CD4-positive, alpha-beta T cell (primary cell): ENCODE measurements at regions of chr7 and their contacts with region 1.

Region 1: DNA sequence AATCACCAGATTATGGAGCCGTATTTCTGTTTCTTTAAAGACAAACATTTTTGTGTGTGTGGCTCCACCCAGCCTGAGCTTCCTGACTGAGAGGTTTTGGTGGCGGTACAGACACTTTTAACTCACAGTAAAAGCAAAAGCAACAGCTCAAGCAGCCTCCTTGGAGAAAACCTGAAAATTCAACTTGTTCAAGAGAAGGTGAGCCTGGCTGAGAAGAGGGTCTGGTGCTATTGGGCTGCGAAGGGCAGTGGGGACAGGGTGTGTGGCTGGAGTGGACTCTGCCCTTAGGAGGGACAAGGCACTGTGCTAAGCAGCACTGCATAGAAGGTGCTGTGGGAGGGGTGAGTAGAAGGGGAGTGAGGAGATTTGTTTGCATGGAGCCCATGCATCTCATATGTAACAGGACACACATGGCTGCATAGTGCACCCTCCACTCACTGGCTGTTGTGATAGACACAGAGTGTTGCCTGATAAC is at the start of gene GIMAP7:
- DNase-seq: peak; percentile 59 to 85 (median 70)
- ATAC-seq: peak; percentile 82
- H3K4me3 ChIP-seq: peak within 1 kb of the TSS; percentile 79
- H3K4me3 Mint-ChIP-seq: peak within 1 kb of the TSS; percentile 100
- H3K27ac ChIP-seq: peak within 1 kb of the TSS; percentile 63 to 84
- H3K27ac Mint-ChIP-seq: peak within 1 kb of the TSS; percentile 93
- H3K4me1 ChIP-seq: peaks cover 42% of the 10 kb centered on the region
- H3K4me1 Mint-ChIP-seq: peaks cover 51% of the 10 kb centered on the region
- H3K27me3 ChIP-seq: no peaks in the 10 kb centered on the region
- H3K27me3 Mint-ChIP-seq: no peaks in the 10 kb centered on the region
- CTCF ChIP-seq: no peak
- total RNA-seq, gene GIMAP7: 48.4 to 50.7 TPM

Region 2: GRCh38 chr7:149654588-149654987 is 860.2 kb before region 1 on chr7:
- CTCF ChIA-PET with region 1: no interaction called
- POLR2A ChIA-PET with region 1: no interaction called
- intact Hi-C with region 1: no loop called
- DNase-seq: no peak
- ATAC-seq: no peak
- H3K4me3 ChIP-seq: no peak overlapping the region
- H3K4me3 Mint-ChIP-seq: no peak overlapping the region
- H3K27ac ChIP-seq: no peak overlapping the region
- H3K27ac Mint-ChIP-seq: no peak overlapping the region
- H3K4me1 ChIP-seq: no peaks in the 10 kb centered on the region
- H3K4me1 Mint-ChIP-seq: no peaks in the 10 kb centered on the region
- H3K27me3 ChIP-seq: peaks cover 3 to 4% of the 10 kb centered on the region in 2 experiments
- H3K27me3 Mint-ChIP-seq: peaks cover 45% of the 10 kb centered on the region
- CTCF ChIP-seq: no peak

Region 3: DNA sequence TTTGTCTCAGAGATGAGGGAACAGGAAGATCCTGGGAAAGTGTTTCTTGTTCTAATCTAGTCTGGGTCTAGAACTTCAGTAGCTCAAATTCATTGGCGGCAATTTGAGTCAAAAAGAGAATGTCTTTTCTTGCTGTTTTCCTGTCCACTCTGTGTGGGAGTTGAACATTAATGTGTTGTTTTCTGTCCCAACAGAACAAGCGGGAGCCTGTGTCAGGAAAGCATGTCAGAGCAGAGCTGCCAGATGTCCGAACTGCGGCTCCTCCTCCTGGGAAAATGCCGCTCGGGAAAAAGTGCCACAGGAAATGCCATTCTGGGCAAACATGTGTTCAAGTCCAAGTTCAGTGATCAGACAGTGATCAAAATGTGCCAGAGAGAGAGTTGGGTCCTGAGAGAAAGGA is 48.3 kb before region 1 on chr7:
- CTCF ChIA-PET with region 1: no interaction called
- POLR2A ChIA-PET with region 1: interaction called, 14 read pairs
- intact Hi-C with region 1: loop called in 1 of 2 experiments (anchors 5 kb)
- DNase-seq: no peak
- ATAC-seq: no peak
- H3K4me3 ChIP-seq: no peak overlapping the region
- H3K4me3 Mint-ChIP-seq: peak overlapping the region; percentile 17
- H3K27ac ChIP-seq: no peak overlapping the region
- H3K27ac Mint-ChIP-seq: peak overlapping the region; percentile 81
- H3K4me1 ChIP-seq: peaks cover 52% of the 10 kb centered on the region
- H3K4me1 Mint-ChIP-seq: peaks cover 97% of the 10 kb centered on the region
- H3K27me3 ChIP-seq: no peaks in the 10 kb centered on the region
- H3K27me3 Mint-ChIP-seq: no peaks in the 10 kb centered on the region
- CTCF ChIP-seq: no peak

Region 4: GRCh38 chr7:150481186-150481920 is 33.4 kb before region 1 on chr7:
- CTCF ChIA-PET with region 1: interaction called, 9 read pairs
- POLR2A ChIA-PET with region 1: interaction called, 312 read pairs
- intact Hi-C with region 1: loop called (anchors 1 to 2 kb)
- DNase-seq: peak; percentile 36 to 90 (median 58)
- ATAC-seq: peak; percentile 59
- H3K4me3 ChIP-seq: peak overlapping the region; percentile 20
- H3K4me3 Mint-ChIP-seq: peak overlapping the region; percentile 84
- H3K27ac ChIP-seq: peak overlapping the region; percentile 92 to 95
- H3K27ac Mint-ChIP-seq: peak overlapping the region; percentile 97
- H3K4me1 ChIP-seq: peaks cover 76% of the 10 kb centered on the region
- H3K4me1 Mint-ChIP-seq: peaks cover 95% of the 10 kb centered on the region
- H3K27me3 ChIP-seq: no peaks in the 10 kb centered on the region
- H3K27me3 Mint-ChIP-seq: no peaks in the 10 kb centered on the region
- CTCF ChIP-seq: no peak

Region 5: DNA sequence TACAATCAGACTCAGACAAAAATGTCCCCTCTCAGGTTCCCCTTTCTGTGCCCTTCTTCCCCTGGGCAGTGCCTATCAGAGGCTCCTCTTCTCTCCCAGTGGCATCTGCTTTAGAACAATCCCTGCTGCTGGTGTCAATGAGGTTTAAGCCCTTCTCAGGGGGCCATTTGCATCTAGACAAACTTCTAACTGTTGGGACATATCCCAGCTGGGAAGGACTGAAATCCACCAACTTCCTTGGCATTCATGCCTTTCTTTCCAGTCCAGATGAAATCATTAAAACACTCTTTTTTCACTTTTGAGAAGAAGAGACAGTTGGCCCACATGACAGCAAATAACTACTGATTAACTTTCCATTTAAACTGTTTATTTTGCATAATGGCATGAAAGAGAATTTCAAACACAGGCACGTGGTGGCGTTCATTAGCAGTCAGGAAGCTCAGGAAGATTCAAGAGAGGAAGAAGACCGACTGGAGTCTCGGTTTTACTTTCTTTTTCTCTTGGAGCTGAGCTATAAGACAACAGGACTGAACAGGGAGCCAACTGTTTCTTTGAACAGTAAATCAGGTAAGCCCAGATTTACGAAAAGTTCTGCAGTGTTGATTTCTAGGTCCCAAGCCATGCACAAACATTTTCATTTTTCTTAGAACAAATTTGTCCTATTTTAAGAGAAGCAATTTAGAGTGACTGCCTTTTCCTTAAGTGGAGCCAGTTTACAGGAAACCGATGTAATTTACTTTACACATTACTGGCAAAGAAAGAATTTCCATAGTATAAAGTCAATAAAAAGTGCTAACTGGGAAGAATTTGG is 170.6 kb after region 1 on chr7 and contains the start of gene GIMAP2:
- CTCF ChIA-PET with region 1: no interaction called
- POLR2A ChIA-PET with region 1: interaction called, 36 read pairs
- intact Hi-C with region 1: loop called in 1 of 2 experiments (anchors 2 kb)
- DNase-seq: peak in 9 of 14 experiments; percentile 22 to 81 (median 48)
- ATAC-seq: peak; percentile 86
- H3K4me3 ChIP-seq: peak within 1 kb of the TSS; percentile 80
- H3K4me3 Mint-ChIP-seq: peak within 1 kb of the TSS; percentile 100
- H3K27ac ChIP-seq: peak within 1 kb of the TSS; percentile 78 to 95
- H3K27ac Mint-ChIP-seq: peak within 1 kb of the TSS; percentile 100
- H3K4me1 ChIP-seq: peaks cover 44% of the 10 kb centered on the region
- H3K4me1 Mint-ChIP-seq: peaks cover 85% of the 10 kb centered on the region
- H3K27me3 ChIP-seq: no peaks in the 10 kb centered on the region
- H3K27me3 Mint-ChIP-seq: no peaks in the 10 kb centered on the region
- CTCF ChIP-seq: no peak
- total RNA-seq, gene GIMAP2: 64.1 to 65.1 TPM

Region 6: DNA sequence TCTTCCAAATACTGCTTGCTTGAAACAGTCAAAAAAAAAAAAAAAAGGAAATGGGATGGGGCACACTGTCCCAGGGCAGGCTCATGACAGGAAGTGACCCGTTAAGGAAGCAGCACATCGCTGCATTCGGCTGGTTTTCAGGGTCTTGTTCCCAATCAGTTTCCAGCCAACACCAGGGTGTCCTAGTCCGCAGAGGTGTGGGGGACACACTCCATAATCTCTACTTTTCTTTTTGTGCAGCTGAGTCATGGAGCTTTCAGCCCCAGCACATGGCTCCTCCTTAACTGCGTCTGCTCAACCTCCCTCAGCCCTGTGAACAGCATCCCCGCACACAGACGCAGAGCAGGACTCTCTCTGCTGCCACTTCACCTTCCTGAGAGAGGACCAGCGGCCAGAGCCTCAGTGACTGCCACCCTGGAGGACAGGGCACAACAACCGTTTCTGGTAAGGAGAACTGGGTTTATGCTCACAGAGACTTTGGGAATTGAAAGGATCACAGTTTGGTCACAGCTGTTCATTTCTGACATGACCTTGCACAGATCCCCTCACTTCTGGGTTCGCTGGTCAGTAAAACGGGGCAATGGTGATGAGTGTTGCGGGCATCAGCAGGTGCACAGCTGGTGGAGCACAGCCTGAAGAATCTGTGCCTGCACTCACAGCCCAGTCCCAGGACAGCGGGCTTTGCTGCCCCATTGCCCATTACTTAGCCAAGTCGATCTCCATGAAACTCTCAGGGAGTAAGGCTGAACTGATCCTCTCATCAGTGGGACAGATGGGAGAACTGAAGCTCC is 222.7 kb after region 1 on chr7 and contains the start of gene GIMAP5:
- CTCF ChIA-PET with region 1: interaction called, 5 read pairs
- POLR2A ChIA-PET with region 1: interaction called, 39 read pairs
- intact Hi-C with region 1: loop called in 1 of 2 experiments (anchors 5 kb)
- DNase-seq: peak in 12 of 14 experiments; percentile 29 to 78 (median 70)
- ATAC-seq: peak; percentile 75
- H3K4me3 ChIP-seq: peak within 1 kb of the TSS; percentile 65
- H3K4me3 Mint-ChIP-seq: peak within 1 kb of the TSS; percentile 96
- H3K27ac ChIP-seq: peak within 1 kb of the TSS; percentile 80 to 87
- H3K27ac Mint-ChIP-seq: peak within 1 kb of the TSS; percentile 87
- H3K4me1 ChIP-seq: peaks cover 59% of the 10 kb centered on the region
- H3K4me1 Mint-ChIP-seq: peaks cover 74% of the 10 kb centered on the region
- H3K27me3 ChIP-seq: no peaks in the 10 kb centered on the region
- H3K27me3 Mint-ChIP-seq: no peaks in the 10 kb centered on the region
- CTCF ChIP-seq: no peak
- total RNA-seq, gene GIMAP5: 31.3 to 35.2 TPM